Activated B cell treated with CpG ODN at 0.5 μM for 24 hours (primary cell): ENCODE measurements at regions of chr6 and their contacts with region 1.

Region 1: GRCh38 chr6:134174672-134175198 is 122.3 kb upstream of the SLC2A12 start:
- DNase-seq: peak; percentile 94
- ATAC-seq: peak; percentile 83
- H3K4me3 Mint-ChIP-seq: peak overlapping the region; percentile 97
- H3K27ac Mint-ChIP-seq: peak overlapping the region; percentile 91
- H3K4me1 Mint-ChIP-seq: peaks cover 50% of the 10 kb centered on the region
- H3K27me3 Mint-ChIP-seq: no peaks in the 10 kb centered on the region
- CTCF ChIP-seq: no peak

Region 2: DNA sequence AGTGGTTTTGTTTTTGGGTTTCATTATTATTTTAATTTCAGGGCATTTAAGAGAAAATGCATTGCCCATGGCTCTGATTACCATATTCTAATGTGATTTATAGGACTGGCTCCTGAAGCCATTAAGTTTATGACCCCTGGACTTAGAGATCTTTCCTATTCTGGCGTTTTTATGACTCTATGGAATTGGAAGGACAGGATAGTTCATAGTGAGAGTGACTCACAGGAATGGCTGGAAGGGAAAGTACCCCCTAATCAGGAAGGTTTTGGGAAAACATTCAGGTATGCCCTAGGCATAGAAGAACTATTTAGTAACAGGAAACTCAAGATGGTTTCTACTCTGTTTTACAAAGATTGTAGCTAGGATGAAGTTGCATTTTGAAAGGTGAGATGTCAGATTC is 13.7 kb before region 1 on chr6:
- CTCF ChIA-PET with region 1: interaction called, 3 read pairs
- POLR2A ChIA-PET with region 1: no interaction called
- intact Hi-C with region 1: loop called (anchors 1 kb)
- DNase-seq: no peak
- ATAC-seq: no peak
- H3K4me3 Mint-ChIP-seq: no peak overlapping the region
- H3K27ac Mint-ChIP-seq: no peak overlapping the region
- H3K4me1 Mint-ChIP-seq: no peaks in the 10 kb centered on the region
- H3K27me3 Mint-ChIP-seq: no peaks in the 10 kb centered on the region
- CTCF ChIP-seq: no peak

Region 3: GRCh38 chr6:134247231-134247833 is 72.6 kb after region 1 on chr6:
- CTCF ChIA-PET with region 1: interaction called, 4 read pairs
- POLR2A ChIA-PET with region 1: interaction called, 15 read pairs
- intact Hi-C with region 1: loop called (anchors 1 kb)
- DNase-seq: peak; percentile 44
- ATAC-seq: peak; percentile 82
- H3K4me3 Mint-ChIP-seq: peak overlapping the region; percentile 47
- H3K27ac Mint-ChIP-seq: peak overlapping the region; percentile 97
- H3K4me1 Mint-ChIP-seq: peaks cover 59% of the 10 kb centered on the region
- H3K27me3 Mint-ChIP-seq: no peaks in the 10 kb centered on the region
- CTCF ChIP-seq: no peak

Region 4: DNA sequence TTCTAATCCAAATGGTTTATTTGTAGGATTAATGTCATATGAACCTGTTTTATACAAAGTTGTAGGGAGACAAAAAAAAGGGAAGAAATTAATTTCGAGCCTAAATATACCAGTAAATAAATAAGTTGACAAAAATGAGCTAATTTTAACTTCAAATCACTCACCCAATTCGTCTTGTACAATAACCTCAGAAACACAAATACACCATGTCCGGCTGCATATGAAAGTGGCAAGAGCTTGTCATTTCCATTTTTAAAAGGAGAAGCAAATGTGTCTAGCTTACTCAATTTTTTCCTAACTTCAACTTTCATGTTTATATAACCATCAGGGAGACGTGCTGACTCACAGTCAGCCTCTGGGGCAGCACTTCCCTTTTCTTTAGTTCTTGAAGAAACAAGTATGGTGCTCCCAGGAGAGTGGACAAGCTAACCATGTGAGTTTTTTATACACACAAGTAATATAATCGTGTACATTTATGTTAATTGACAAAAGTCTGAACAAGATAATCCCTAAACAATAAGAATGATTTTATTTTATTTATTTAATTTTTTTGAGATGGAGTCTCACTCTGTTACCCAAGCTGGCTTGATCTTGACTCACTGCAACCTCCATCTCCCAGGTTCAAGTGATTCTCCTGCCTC is 198.7 kb after region 1 on chr6:
- CTCF ChIA-PET with region 1: interaction called, 4 read pairs
- POLR2A ChIA-PET with region 1: interaction called, 4 read pairs
- intact Hi-C with region 1: loop called (anchors 1 kb)
- DNase-seq: no peak
- ATAC-seq: peak; percentile 97
- H3K4me3 Mint-ChIP-seq: peak overlapping the region; percentile 53
- H3K27ac Mint-ChIP-seq: peak overlapping the region; percentile 71
- H3K4me1 Mint-ChIP-seq: peaks cover 28% of the 10 kb centered on the region
- H3K27me3 Mint-ChIP-seq: no peaks in the 10 kb centered on the region
- CTCF ChIP-seq: no peak

Region 5: GRCh38 chr6:134520181-134521115 is 345.7 kb after region 1 on chr6:
- CTCF ChIA-PET with region 1: no interaction called
- POLR2A ChIA-PET with region 1: no interaction called
- intact Hi-C with region 1: loop called (anchors 5 kb)
- DNase-seq: no peak
- ATAC-seq: no peak
- H3K4me3 Mint-ChIP-seq: no peak overlapping the region
- H3K27ac Mint-ChIP-seq: no peak overlapping the region
- H3K4me1 Mint-ChIP-seq: peaks cover 12% of the 10 kb centered on the region
- H3K27me3 Mint-ChIP-seq: no peaks in the 10 kb centered on the region
- CTCF ChIP-seq: no peak

Region 6: DNA sequence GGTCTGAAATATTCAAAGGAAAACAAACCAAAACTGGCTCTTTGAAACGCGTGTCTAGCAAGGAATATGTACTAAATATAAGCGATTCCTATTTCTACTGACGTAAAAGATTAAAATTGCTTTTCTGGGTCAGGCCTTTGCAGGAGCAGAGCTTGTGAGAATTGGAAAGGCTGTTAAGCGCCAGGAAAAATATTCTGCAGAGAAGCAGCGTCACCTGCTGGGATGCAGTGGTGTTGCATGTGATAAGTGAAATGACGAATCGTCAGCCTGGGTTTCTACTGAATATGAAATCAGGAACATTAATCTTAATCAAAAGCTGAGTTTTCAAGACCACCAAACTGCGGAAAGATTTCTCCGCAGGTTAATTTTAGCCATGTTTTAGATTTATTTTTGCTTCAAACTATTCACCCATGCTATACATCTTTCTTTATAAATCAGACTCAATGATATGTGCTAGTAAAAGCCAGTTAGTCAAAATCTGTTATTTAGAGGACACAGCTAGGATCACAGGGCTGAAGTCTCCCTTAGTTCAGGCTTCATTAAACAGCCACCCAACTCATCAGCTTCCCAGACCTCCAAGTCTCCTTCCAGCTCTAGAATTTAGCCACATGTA is 707.8 kb after region 1 on chr6:
- CTCF ChIA-PET with region 1: interaction called, 9 read pairs
- POLR2A ChIA-PET with region 1: interaction called, 3 read pairs
- intact Hi-C with region 1: loop called (anchors 1 kb)
- DNase-seq: peak; percentile 35
- ATAC-seq: peak; percentile 57
- H3K4me3 Mint-ChIP-seq: no peak overlapping the region
- H3K27ac Mint-ChIP-seq: no peak overlapping the region
- H3K4me1 Mint-ChIP-seq: no peaks in the 10 kb centered on the region
- H3K27me3 Mint-ChIP-seq: peaks cover 11% of the 10 kb centered on the region
- CTCF ChIP-seq: peak; percentile 84

Region 7: GRCh38 chr6:135183532-135184440 is 1009.1 kb after region 1 on chr6:
- CTCF ChIA-PET with region 1: no interaction called
- POLR2A ChIA-PET with region 1: no interaction called
- intact Hi-C with region 1: loop called (anchors 5 kb)
- DNase-seq: peak; percentile 48
- ATAC-seq: peak; percentile 38
- H3K4me3 Mint-ChIP-seq: peak overlapping the region; percentile 87
- H3K27ac Mint-ChIP-seq: peak overlapping the region; percentile 57
- H3K4me1 Mint-ChIP-seq: peaks cover 30% of the 10 kb centered on the region
- H3K27me3 Mint-ChIP-seq: no peaks in the 10 kb centered on the region
- CTCF ChIP-seq: no peak

Region 8: GRCh38 chr6:135686784-135687301 is 1512.1 kb after region 1 on chr6:
- CTCF ChIA-PET with region 1: no interaction called
- POLR2A ChIA-PET with region 1: no interaction called
- intact Hi-C with region 1: no loop called
- DNase-seq: no peak
- ATAC-seq: no peak
- H3K4me3 Mint-ChIP-seq: no peak overlapping the region
- H3K27ac Mint-ChIP-seq: no peak overlapping the region
- H3K4me1 Mint-ChIP-seq: peaks cover 17% of the 10 kb centered on the region
- H3K27me3 Mint-ChIP-seq: peaks cover 6% of the 10 kb centered on the region
- CTCF ChIP-seq: no peak